Heart right ventricle (tissue), 16 donors: ENCODE measurements at regions of chr6 and their contacts with region 1.

Region 1: DNA sequence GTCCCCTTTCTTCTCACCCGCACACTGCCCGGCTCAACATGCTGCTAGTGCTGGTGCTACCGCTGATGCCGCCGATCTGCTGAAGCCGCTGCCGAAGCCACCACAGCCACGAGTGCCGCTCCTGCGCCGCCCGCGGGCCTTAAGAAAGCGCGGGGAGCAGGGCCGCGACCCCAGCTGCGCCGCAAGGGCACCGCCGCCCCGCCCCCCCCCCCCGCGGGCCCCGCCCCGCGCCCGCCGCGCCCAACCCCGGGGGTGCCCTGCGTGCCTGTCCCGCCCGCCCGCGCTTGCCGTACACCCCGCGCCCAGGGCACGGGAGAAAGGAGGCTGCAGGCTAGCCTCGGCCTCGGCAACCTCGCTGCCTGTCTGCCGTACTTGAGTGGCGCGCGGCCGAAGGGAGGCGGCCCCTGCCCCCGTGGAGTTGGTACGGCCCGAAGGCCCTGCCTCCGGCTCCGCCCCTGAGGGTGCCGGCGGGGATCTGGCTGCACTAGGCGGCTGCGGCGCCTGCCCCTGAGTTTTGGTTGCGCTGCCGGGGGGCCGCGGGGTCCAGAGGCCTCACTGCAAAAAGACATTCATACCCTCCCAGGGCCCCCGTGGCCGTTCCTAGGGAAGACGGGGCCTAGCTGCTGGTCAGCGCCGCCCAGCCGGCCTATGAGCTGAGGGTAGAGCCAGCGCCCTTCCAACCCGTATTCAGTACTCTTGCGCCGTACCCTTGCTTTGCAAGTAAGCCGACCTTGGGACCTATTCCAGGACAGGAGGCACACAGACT is at the start of gene SOD2:
- DNase-seq: peak; percentile 84 to 87
- ATAC-seq: peak; percentile 89 to 93 (median 92)
- H3K4me3 ChIP-seq: peak within 1 kb of the TSS; percentile 81 to 99 (median 96)
- H3K27ac ChIP-seq: peak within 1 kb of the TSS; percentile 95 to 99 (median 98)
- H3K4me1 ChIP-seq: peaks cover 2 to 62% (median 53%) of the 10 kb centered on the region in 9 donors
- H3K27me3 ChIP-seq: no peaks in the 10 kb centered on the region
- CTCF ChIP-seq: no peak
- total RNA-seq, gene SOD2: 720 to 1,111 (median 848) TPM

Region 2: GRCh38 chr6:159715166-159715565 is 21.9 kb after region 1 on chr6:
- intact Hi-C with region 1: loop called in 1 of 10 experiments (anchors 2 kb)
- DNase-seq: no peak
- ATAC-seq: no peak
- H3K4me3 ChIP-seq: no peak overlapping the region
- H3K27ac ChIP-seq: peak overlapping the region in 6 of 10 donors; percentile 25 to 92 (median 76)
- H3K4me1 ChIP-seq: peaks cover 5 to 49% (median 20%) of the 10 kb centered on the region in 9 donors
- H3K27me3 ChIP-seq: no peaks in the 10 kb centered on the region
- CTCF ChIP-seq: no peak

Region 3: DNA sequence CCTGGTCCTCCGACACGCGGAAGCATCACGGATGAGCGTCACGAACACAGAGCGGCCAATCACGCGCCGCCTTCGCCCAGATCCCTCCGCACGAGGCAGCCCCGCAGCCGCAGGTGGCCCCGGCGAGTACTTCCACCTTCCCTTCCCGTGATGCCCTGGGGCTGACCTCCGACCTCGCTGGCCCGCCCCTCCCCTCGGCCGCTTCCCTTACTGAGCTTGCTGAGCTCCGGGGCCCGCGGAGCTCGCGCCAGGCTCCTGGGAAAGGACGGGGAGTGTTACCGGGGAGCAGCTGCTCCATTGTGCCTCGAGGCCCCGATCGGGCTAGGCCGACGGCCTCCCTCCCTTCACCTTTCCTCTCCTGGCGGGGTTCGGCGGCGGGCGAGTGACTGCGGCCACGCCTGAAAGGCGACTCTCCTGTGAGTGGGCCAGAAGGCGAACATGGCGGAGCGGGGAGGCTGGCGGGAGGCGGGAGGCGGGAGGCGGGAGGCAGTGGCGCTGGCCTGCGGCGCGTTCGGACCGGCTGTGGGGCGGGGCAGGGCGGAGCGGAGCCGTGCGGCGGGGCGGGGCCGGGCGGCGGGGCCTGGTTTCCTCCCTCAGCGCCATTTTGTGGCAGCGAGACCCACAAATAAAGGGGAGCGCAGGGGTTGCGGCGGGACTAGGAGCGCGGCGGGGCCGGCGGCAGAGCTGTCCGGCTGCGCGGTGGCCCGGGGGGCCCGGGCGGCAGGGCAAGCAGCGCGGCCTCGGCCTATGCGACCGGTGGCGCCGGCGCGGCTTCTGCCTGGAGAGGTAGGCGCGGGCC is 33.8 kb after region 1 on chr6 and contains the start of gene WTAP:
- intact Hi-C with region 1: loop called in 8 of 10 experiments (anchors 1 to 5 kb)
- DNase-seq: peak; percentile 94 to 95
- ATAC-seq: peak; percentile 96 to 98 (median 97)
- H3K4me3 ChIP-seq: peak within 1 kb of the TSS; percentile 64 to 96 (median 86)
- H3K27ac ChIP-seq: peak within 1 kb of the TSS; percentile 92 to 100 (median 99)
- H3K4me1 ChIP-seq: peaks cover 0 to 57% (median 51%) of the 10 kb centered on the region in 9 donors
- H3K27me3 ChIP-seq: no peaks in the 10 kb centered on the region
- CTCF ChIP-seq: no peak
- total RNA-seq, gene WTAP: 44.4 to 70.1 (median 47.2) TPM

Region 4: GRCh38 chr6:159761873-159762680 is 68.8 kb after region 1 on chr6 and contains the start of gene ACAT2:
- intact Hi-C with region 1: loop called in 4 of 10 experiments (anchors 5 to 10 kb)
- DNase-seq: peak; percentile 94 to 97
- ATAC-seq: peak; percentile 98 to 100 (median 99)
- H3K4me3 ChIP-seq: peak within 1 kb of the TSS; percentile 82 to 100 (median 97)
- H3K27ac ChIP-seq: peak within 1 kb of the TSS; percentile 87 to 99 (median 97)
- H3K4me1 ChIP-seq: peaks cover 3 to 30% (median 19%) of the 10 kb centered on the region in 9 donors
- H3K27me3 ChIP-seq: no peaks in the 10 kb centered on the region
- CTCF ChIP-seq: peak in 3 of 9 donors; percentile 9 to 10 (median 10)
- total RNA-seq, gene ACAT2: 3.4 to 7.5 (median 5.8) TPM

Region 5: DNA sequence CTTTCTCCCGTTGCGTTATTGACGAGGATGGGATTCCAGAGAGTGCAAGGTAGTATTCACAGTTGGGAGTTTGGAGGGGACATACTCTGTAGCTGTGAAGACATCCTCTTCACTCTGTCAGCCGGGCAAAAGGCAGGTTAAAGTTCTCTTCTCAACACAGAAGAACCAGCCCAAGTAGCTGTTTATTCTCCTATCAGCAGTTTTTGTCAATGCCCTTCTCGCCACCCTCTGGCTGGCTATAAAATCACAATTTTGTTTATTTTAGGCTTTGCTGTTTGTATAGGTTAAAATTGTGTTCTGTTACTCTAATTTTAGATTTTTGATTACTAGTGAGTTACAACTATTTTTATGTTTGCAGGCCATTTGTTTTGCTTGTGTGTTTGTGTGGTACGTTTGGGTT is 159.6 kb after region 1 on chr6:
- intact Hi-C with region 1: loop called in 1 of 10 experiments (anchors 10 kb)
- DNase-seq: no peak
- ATAC-seq: no peak
- H3K4me3 ChIP-seq: no peak overlapping the region
- H3K27ac ChIP-seq: no peak overlapping the region
- H3K4me1 ChIP-seq: peaks cover 0 to 14% (median 0%) of the 10 kb centered on the region in 9 donors
- H3K27me3 ChIP-seq: no peaks in the 10 kb centered on the region
- CTCF ChIP-seq: peak in 5 of 9 donors; percentile 11 to 31 (median 24)

Region 6: GRCh38 chr6:159929819-159930218 is 236.5 kb after region 1 on chr6:
- intact Hi-C with region 1: loop called in 1 of 10 experiments (anchors 10 kb)
- DNase-seq: peak in 1 of 2 donors; percentile 36
- ATAC-seq: peak in 1 of 8 donors; percentile 42
- H3K4me3 ChIP-seq: no peak overlapping the region
- H3K27ac ChIP-seq: no peak overlapping the region
- H3K4me1 ChIP-seq: peaks cover 0 to 23% (median 7%) of the 10 kb centered on the region in 9 donors
- H3K27me3 ChIP-seq: no peaks in the 10 kb centered on the region
- CTCF ChIP-seq: no peak